ENCODE measurements at regions of chr11 and their contacts with region 1.

Region 1: DNA sequence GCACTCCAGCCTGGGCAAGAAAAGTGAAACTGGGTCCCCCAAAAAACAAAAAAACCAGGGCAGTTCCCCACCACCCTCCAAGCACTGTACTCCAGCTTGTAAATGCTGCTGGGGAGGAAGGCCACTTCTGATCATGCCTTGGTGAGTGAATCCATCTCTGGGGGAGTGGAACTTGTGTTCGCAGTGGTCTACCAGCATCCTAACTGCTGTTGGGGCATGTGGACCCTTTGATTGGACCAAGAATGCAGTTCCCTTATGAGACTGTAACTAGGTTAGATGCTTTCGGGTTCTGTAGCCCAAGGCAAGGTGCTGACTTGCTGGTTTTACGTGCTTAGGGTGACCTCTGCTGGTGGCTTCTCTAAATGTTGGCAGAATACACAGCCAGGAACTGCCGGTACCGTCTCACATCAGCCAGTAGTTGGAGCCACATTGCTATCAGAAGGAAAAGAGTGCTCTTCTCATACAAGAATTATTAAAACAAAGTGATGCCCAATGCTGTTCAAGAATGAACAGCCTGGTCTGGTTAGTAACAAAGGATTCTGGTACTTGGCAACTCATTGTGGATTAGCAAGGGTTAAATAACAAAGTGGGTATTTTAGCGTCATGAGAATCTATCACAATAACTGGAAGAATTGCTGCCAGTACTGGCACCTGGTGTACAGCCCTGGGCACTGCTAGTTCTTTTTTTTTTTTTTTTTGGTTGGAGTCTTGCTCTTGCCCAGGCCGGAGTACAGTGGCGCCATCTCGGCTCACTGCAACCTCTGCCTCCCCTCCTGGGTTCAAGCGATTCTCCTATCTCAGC is 13.0 kb downstream of the EIF1AD start:
- DNase-seq: peak; percentile 93
- CTCF ChIP-seq: peak; percentile 95

Region 2: DNA sequence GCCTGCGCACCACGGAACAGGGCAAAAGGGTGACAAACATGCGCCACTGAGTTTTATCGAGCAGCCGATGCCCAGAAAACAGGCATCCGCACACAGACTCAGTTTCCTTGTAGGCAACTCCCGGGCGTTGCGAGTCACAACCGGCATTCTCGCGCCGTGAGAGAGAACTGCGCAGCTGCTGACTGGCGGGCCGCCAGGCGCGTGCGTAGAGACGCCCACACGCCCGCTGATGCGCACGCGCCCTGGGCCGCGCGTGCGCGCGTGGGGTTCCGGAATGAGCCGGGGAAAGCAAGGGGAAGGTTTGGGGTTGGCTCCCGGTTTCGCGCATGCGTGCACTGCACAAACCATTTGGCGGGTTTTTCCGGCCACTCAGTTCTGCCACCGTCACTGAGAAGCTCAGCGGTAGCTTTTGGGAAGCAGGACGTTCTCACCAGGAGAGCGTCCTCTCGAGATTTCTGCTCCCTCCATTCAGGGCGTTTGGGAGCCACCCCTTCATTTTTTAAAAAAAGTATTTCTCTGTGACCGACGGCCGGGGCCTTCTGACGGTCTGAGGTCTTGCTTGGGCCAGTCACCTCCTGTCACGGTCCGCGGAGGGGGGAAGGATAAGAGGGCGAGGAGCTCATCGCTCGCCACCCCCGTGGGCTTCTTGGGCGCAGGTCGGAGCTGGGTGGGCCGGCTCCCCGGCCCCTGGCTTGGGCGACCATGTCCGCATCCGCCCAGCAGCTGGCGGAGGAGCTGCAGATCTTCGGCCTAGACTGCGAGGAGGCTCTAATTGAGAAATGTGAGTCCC is 727.2 kb before region 1 on chr11 and contains the start of gene POLA2:
- in situ Hi-C with region 1: no loop called
- DNase-seq: peak; percentile 99
- CTCF ChIP-seq: no peak

Region 3: GRCh38 chr11:65711785-65712632 is 277.0 kb before region 1 on chr11 and contains the start of gene KAT5:
- in situ Hi-C with region 1: loop called (anchors 25 kb)
- DNase-seq: peak; percentile 94
- CTCF ChIP-seq: peak; percentile 96

Region 4: GRCh38 chr11:65884686-65885092 is 104.3 kb before region 1 on chr11:
- in situ Hi-C with region 1: loop called (anchors 5 kb)
- DNase-seq: peak; percentile 88
- CTCF ChIP-seq: peak; percentile 100

Region 5: GRCh38 chr11:65945430-65945911 is 43.5 kb before region 1 on chr11 and contains the start of gene TSGA10IP:
- in situ Hi-C with region 1: no loop called
- DNase-seq: no peak
- CTCF ChIP-seq: no peak

Region 6: DNA sequence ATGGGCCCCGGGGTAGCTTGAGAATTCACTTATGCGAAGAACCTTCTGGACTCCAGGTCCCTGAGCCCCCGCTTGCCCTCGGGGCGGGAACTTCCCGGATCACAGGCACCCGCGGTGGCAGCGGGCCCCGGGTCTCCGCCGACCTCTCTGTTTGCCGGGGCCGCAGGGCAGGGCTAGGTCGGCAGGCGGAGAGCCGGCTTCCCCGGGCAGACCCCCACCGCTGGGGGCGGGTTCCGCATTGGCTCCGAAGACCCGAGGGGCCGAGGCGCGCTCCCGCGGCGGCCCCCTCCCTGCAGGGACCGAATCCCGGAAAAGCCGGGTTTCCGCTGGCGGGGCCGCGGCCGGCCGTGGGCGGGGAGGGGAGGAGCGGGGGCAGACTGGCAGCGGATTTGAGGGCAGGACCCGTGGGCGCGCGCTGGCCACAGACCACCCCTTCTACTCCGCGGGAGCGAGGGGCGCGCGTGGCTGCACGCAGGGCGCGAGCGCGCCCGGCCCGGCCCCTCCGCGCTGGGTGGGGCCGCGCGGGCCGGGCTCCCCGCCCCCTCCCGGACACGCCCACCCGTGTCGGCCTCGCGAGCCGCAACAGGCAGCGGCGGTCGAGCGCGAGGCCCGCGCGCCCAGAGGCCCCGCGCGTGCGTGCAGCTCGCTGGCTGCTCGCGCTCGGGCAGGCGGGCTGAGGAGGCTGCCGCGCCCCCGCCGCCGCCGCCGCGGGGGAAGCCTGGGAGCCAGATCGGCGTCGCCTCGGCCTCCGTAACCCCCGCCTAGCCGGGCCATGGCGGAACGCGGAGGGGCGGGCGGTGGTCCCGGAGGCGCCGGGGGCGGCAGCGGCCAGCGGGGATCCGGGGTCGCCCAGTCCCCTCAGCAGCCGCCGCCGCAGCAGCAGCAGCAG is 81.0 kb after region 1 on chr11 and contains the start of gene PACS1:
- in situ Hi-C with region 1: no loop called
- DNase-seq: peak; percentile 91
- CTCF ChIP-seq: no peak